ENCODE measurements at regions of chr17 and their contacts with region 1.

Region 1: DNA sequence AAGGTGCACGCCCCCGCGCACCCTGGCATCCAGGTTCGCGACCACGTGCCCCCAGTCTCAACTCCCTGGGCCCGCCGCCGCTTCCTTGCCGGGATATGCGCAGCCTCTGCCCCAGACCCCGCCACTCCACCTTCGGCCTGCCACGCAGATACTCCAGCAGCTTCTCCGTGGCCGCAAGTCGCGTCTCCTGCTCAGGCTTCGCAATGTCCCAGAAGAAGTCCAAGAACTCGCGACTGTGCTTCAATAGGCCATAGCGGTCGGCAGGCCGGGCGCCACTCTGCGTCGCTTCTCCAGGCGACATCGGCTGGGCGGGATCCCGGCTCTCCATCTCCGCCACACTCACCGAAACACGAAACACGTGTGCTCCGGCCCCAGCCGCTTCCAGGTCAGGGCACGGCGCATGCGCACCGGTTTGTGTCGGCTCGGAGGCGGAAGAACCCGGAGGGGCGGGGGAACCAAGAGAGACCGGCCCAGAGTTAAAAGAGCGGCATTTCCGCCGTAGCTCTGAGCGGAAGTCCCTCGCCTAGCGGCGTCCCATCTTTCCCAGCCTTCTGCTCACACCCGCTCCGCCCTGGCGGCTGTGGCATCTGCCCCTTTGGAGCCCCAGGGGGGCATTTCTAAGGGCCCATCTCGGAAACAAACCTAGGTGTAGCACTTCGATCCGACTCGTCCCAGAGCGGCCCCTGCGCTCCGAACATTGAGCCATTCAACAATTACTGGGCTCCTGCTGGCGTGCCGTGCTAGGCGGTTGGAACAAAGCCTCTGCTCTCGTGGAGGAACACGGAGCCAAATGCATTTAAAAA is at the start of gene MYBBP1A:
- DNase-seq: peak; percentile 98
- H3K4me3 ChIP-seq: peak within 1 kb of the TSS; percentile 96
- H3K27ac ChIP-seq: peak within 1 kb of the TSS; percentile 68
- H3K4me1 ChIP-seq: peaks cover 26% of the 10 kb centered on the region
- CTCF ChIP-seq: peak; percentile 33
- total RNA-seq, gene MYBBP1A: 137 and 142 TPM in 2 replicates

Region 2: DNA sequence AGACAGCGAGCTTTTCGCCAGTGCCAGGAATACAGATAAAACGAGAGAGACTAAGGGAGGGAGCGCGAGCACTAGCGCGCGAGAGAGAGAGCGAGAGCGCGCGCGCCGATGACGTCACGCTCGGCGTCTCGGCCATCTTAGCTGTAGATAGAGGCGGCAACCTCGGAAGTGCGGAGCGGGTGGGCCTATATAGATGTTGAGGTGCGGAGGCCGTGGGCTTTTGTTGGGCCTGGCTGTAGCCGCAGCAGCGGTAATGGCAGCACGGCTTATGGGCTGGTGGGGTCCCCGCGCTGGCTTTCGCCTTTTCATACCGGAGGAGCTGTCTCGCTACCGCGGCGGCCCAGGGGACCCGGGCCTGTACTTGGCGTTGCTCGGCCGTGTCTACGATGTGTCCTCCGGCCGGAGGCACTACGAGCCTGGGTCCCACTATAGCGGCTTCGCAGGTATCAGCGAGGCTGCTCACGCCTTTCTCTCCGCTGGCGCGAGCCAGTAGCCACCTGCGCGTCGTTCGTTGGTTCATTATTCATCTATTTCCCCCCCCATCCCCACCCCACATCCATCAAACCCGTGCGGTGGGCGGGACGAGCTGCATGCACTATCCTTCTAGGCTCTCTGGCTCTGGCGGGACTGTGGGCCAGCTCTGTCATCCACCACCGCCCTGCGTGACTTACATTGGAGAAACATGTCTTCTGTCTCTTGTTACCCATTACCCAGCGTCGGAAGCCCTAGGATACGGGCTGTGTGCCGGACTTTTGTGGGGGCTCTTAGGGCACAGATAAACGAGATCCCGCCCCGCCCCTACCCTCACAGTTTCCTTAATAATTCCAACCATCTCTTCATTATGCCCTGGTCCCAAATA is 411.4 kb before region 1 on chr17:
- CTCF ChIA-PET with region 1: no interaction called
- POLR2A ChIA-PET with region 1: no interaction called
- intact Hi-C with region 1: loop called (anchors 5 kb)
- DNase-seq: peak; percentile 94
- H3K4me3 ChIP-seq: peak overlapping the region; percentile 88
- H3K27ac ChIP-seq: peak overlapping the region; percentile 87
- H3K4me1 ChIP-seq: peaks cover 20% of the 10 kb centered on the region
- CTCF ChIP-seq: no peak

Region 3: GRCh38 chr17:4480929-4481898 is 74.0 kb before region 1 on chr17:
- CTCF ChIA-PET with region 1: no interaction called
- POLR2A ChIA-PET with region 1: no interaction called
- intact Hi-C with region 1: no loop called
- DNase-seq: peak; percentile 73
- H3K4me3 ChIP-seq: peak overlapping the region; percentile 11
- H3K27ac ChIP-seq: peak overlapping the region; percentile 15
- H3K4me1 ChIP-seq: peaks cover 15% of the 10 kb centered on the region
- CTCF ChIP-seq: no peak

Region 4: GRCh38 chr17:4522661-4523060 is 32.5 kb before region 1 on chr17:
- CTCF ChIA-PET with region 1: no interaction called
- POLR2A ChIA-PET with region 1: no interaction called
- intact Hi-C with region 1: loop called (anchors 2 kb)
- DNase-seq: no peak
- H3K4me3 ChIP-seq: peak overlapping the region; percentile 64
- H3K27ac ChIP-seq: peak overlapping the region; percentile 90
- H3K4me1 ChIP-seq: peaks cover 68% of the 10 kb centered on the region
- CTCF ChIP-seq: no peak

Region 5: GRCh38 chr17:4782652-4783051 is 227.5 kb after region 1 on chr17:
- CTCF ChIA-PET with region 1: no interaction called
- POLR2A ChIA-PET with region 1: no interaction called
- intact Hi-C with region 1: no loop called
- DNase-seq: no peak
- H3K4me3 ChIP-seq: no peak overlapping the region
- H3K27ac ChIP-seq: no peak overlapping the region
- H3K4me1 ChIP-seq: no peaks in the 10 kb centered on the region
- CTCF ChIP-seq: no peak

Measured in OCI-LY7 (cell line).